CD8-positive, alpha-beta T cell (primary cell): ENCODE measurements at regions of chr5 and their contacts with region 1.

Region 1: GRCh38 chr5:121979691-121980090 is 17.9 kb downstream of the SRFBP1 start:
- DNase-seq: no peak
- ATAC-seq: no peak
- H3K4me3 ChIP-seq: no peak overlapping the region
- H3K4me3 Mint-ChIP-seq: no peak overlapping the region
- H3K27ac ChIP-seq: no peak overlapping the region
- H3K27ac Mint-ChIP-seq: no peak overlapping the region
- H3K4me1 ChIP-seq: no peaks in the 10 kb centered on the region
- H3K4me1 Mint-ChIP-seq: peaks cover 44% of the 10 kb centered on the region
- H3K27me3 ChIP-seq: no peaks in the 10 kb centered on the region
- H3K27me3 Mint-ChIP-seq: no peaks in the 10 kb centered on the region
- CTCF ChIP-seq: no peak

Region 2: GRCh38 chr5:121962347-121962670 is 17.4 kb before region 1 on chr5:
- CTCF ChIA-PET with region 1: interaction called, 5 read pairs
- POLR2A ChIA-PET with region 1: no interaction called
- intact Hi-C with region 1: loop called in 1 of 2 experiments (anchors 2 kb)
- DNase-seq: no peak
- ATAC-seq: no peak
- H3K4me3 ChIP-seq: peak overlapping the region; percentile 87
- H3K4me3 Mint-ChIP-seq: peak overlapping the region; percentile 96
- H3K27ac ChIP-seq: peak overlapping the region; percentile 74 to 79
- H3K27ac Mint-ChIP-seq: peak overlapping the region; percentile 94
- H3K4me1 ChIP-seq: peaks cover 12% of the 10 kb centered on the region
- H3K4me1 Mint-ChIP-seq: peaks cover 44% of the 10 kb centered on the region
- H3K27me3 ChIP-seq: no peaks in the 10 kb centered on the region
- H3K27me3 Mint-ChIP-seq: peaks cover 10% of the 10 kb centered on the region
- CTCF ChIP-seq: no peak